ENCODE measurements at regions of chr2 and their contacts with region 1.

Region 1: GRCh38 chr2:132438691-132439090 is 22.1 kb downstream of the GPR39 start:
- DNase-seq: peak; percentile 97
- ATAC-seq: peak; percentile 91
- H3K4me3 ChIP-seq: no peak overlapping the region
- H3K27ac ChIP-seq: peak overlapping the region; percentile 15; the same call in 1 of the 2 replicates
- H3K4me1 ChIP-seq: peaks cover 11% of the 10 kb centered on the region; the same call in 1 of the 2 replicates
- H3K27me3 ChIP-seq: no peaks in the 10 kb centered on the region
- CTCF ChIP-seq: no peak
- POLR2A ChIP-seq: no peak
- RAD21 ChIP-seq: no peak

Region 2: DNA sequence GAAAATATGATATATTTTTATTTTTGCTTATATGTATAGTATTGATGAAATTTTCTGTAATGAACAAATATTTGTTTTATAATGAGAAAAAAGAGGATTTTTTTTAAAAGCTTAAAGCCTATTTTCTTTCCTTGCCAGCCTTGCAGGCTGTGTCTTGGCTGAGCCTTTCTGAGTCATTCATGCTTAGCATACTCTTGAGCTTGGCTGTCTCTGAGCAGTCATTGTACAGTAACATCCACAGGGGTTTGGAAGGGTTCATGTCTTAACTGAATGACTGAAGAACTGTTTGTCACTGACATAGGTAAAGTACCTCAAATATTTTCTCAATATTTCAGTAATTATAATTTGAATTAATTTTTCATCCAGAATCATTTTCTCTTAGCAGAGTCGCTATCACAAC is 27.2 kb after region 1 on chr2:
- CTCF ChIA-PET with region 1: no interaction called
- POLR2A ChIA-PET with region 1: interaction called, 12 read pairs
- dilution Hi-C with region 1: no loop called
- in situ Hi-C with region 1: no loop called
- intact Hi-C with region 1: no loop called
- DNase-seq: peak; percentile 29
- ATAC-seq: no peak
- H3K4me3 ChIP-seq: no peak overlapping the region
- H3K27ac ChIP-seq: no peak overlapping the region
- H3K4me1 ChIP-seq: no peaks in the 10 kb centered on the region
- H3K27me3 ChIP-seq: no peaks in the 10 kb centered on the region
- CTCF ChIP-seq: no peak
- POLR2A ChIP-seq: no peak
- RAD21 ChIP-seq: no peak

Region 3: DNA sequence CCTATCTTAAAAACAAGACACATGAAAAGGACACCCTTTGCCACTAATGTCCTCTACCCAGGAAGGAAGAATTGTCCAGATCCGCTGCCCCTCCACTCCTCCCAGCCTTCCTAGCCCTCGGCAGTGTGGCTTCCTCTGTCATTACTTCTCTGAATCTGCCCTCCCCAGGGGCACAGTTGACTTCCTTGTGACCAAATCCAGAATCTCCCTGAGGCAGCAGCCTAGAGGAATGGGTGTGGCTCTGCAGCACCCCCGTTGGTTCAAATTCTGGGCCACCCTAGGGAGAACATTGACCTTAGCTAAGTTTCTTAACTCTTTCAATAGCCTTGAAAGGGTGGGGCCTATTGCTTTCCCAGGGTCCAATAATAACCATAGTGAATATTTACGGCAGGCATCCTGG is 131.9 kb after region 1 on chr2:
- CTCF ChIA-PET with region 1: no interaction called
- POLR2A ChIA-PET with region 1: no interaction called
- dilution Hi-C with region 1: no loop called
- in situ Hi-C with region 1: no loop called
- intact Hi-C with region 1: no loop called
- DNase-seq: no peak
- ATAC-seq: no peak
- H3K4me3 ChIP-seq: no peak overlapping the region
- H3K27ac ChIP-seq: no peak overlapping the region
- H3K4me1 ChIP-seq: no peaks in the 10 kb centered on the region
- H3K27me3 ChIP-seq: peaks cover 16% of the 10 kb centered on the region
- CTCF ChIP-seq: no peak
- POLR2A ChIP-seq: no peak
- RAD21 ChIP-seq: no peak

Measured in IMR-90 (cell line).